Dendritic cell treated with granulocyte-macrophage colony-stimulating factor and Interleukin-4, amounts not matched to agents 40 ng/mL and 50 ng/mL, for 4 days (primary cell): ENCODE measurements at regions of chrX and their contacts with region 1.

Region 1: DNA sequence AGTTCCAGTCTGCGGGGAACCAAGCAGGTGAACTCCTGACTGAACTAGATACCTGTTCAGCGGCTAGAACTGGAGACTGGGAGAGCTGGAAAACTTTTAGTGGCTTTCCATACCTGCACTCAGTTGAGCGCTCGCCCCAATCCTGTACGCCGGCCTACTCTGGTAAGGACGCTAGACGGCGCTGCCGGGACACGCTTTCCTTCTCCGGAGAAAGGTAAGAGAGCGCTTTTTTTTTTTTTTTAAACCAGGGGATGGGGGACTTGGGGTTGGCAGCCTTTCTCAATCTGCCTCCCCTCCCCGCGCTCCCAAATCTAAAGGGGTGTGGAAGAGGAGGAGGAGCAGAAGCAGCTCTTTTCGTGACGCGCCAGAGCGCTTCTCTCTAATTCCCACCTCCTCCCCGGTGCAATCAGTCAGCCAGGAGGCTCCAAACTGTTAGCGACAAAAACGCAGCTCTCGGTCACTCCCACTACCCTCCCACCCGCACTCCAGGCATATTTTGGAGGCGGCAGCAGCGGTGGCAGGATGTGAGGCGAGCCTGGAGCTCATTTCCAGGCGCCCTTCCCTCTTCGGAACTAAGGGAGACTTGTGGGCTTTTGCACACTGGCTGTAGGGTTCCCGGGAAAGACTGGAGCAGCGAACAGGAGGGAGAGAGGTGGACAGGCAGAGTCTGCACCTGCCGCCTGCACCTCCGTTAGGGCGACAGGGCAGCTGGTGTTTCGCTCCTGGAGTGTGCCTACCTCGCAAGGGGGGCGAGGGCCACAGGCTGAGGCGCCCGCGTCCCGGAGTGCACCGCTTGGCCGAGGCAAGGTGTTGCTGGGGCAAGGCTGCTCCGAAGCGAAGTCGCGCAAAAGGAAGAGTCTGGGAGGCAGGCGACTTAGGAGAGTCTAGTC is at the start of gene IL1RAPL2:
- H3K4me3 Mint-ChIP-seq: no peak within 1 kb of the TSS
- H3K27ac Mint-ChIP-seq: no peak within 1 kb of the TSS
- H3K4me1 Mint-ChIP-seq: no peaks in the 10 kb centered on the region
- H3K27me3 Mint-ChIP-seq: peaks cover 56% of the 10 kb centered on the region

Region 2: DNA sequence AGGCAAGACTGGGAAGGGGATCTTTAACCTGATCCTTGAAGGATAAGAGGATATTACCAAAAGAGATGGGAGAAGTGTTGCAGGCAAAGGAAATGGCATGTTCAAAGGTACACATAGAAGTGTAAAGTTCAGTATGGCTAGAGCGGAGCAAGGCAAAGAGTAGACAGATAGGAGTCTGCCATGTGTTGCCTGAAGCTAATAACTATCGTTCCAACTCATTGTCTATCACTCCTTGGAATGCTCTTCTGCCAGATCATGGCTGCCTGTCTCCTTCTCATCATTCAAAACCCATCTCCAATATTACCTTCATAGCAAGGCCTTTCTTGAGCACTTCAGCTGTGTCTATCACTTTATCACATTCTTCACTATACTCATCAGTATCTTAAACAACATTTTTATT is 55.2 kb before region 1 on chrX:
- intact Hi-C with region 1: loop called (anchors 10 kb)
- H3K4me3 Mint-ChIP-seq: no peak overlapping the region
- H3K27ac Mint-ChIP-seq: no peak overlapping the region
- H3K4me1 Mint-ChIP-seq: no peaks in the 10 kb centered on the region
- H3K27me3 Mint-ChIP-seq: no peaks in the 10 kb centered on the region